H1 (cell line): ENCODE measurements at regions of chr1 and their contacts with region 1.

Region 1: DNA sequence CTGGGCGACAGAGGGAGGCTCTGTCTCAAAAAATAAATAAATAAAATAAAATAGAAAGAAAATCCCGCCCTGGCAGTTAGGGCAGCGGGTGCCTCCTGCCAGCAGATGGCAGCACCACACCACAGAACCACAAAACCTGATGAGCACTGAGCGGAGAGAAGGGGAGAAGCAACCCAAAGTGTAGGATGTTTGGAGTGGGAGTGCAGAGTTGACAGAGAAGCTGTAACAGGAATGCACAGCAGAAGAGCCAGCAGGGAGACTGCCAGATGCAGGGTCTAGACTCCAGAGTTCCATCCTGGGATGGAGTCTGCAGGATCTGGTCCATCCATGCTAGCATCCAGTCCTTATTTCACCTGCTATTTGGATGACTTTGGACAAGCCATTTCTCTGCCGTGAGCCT is 29.7 kb upstream of the KIRREL1 start:
- DNase-seq: peak; percentile 17 to 86
- H3K4me3 ChIP-seq: no peak overlapping the region
- H3K27ac ChIP-seq: no peak overlapping the region
- H3K4me1 ChIP-seq: peaks cover 0 to 8% (median 1%) of the 10 kb centered on the region in 4 experiments; a peak in 3 of 7 replicates
- H3K27me3 ChIP-seq: peaks cover 0 to 2% (median 0%) of the 10 kb centered on the region in 4 experiments; a peak in 1 of 7 replicates
- CTCF ChIP-seq: peak; percentile 75 to 95 (median 76)
- EP300 ChIP-seq: no peak
- POLR2A ChIP-seq: no peak
- RAD21 ChIP-seq: peak; percentile 96 to 97

Region 2: GRCh38 chr1:157862114-157863070 is 101.3 kb before region 1 on chr1:
- CTCF ChIA-PET with region 1: no interaction called
- POLR2A ChIA-PET with region 1: no interaction called
- DNase-seq: no peak
- H3K4me3 ChIP-seq: no peak overlapping the region
- H3K27ac ChIP-seq: no peak overlapping the region
- H3K4me1 ChIP-seq: no peaks in the 10 kb centered on the region
- H3K27me3 ChIP-seq: no peaks in the 10 kb centered on the region
- CTCF ChIP-seq: no peak
- EP300 ChIP-seq: no peak
- POLR2A ChIP-seq: no peak
- RAD21 ChIP-seq: no peak

Region 3: DNA sequence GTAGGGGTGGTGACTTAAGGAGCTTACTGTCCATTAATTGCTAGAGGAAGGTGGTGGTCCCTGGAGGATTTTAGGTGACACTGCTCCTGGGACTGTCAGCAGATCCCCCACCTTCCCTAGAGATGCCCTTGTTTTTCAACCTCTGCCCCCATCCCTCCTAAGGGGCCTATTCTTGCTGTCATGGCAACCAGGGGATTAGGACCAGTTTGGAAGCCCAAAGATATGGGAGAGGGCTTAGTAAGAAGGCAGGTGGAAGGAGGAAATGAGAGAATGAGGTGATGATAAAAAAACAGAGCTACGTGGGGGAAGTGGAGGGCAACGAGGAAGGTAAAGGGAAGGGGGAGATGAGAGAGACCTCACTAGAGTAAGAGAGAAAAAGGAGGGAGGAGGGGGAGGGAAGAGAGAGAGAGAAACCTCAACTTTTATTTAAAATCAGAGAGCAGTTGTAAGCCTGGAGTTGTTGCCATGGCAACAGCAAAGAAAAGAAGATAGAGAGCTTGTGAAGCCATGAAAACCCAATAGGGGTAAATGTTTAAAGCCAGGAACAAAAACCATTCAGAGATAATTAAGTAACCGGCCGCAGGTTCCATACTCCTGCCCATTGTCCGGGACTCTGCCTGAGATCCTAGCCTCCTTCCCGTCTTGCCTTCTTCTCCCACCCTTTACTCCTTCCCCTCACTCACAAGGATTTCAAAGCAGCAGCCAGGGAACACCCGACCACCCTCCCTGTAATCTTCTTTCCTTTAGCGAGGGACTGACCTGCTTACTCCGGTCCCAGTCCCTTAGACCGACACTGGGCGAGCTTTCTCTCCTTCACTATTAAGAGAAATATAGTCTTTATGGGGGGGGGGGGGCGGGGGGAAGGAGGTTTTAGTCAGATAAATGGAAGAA is 50.4 kb after region 1 on chr1:
- CTCF ChIA-PET with region 1: interaction called, 10 read pairs
- POLR2A ChIA-PET with region 1: no interaction called
- DNase-seq: no peak
- H3K4me3 ChIP-seq: peak overlapping the region in 1 of 4 experiments; percentile 11; a peak in 3 of 8 replicates
- H3K27ac ChIP-seq: no peak overlapping the region
- H3K4me1 ChIP-seq: peaks cover 13 to 44% (median 35%) of the 10 kb centered on the region in 4 experiments
- H3K27me3 ChIP-seq: no peaks in the 10 kb centered on the region
- CTCF ChIP-seq: no peak
- EP300 ChIP-seq: no peak
- POLR2A ChIP-seq: no peak
- RAD21 ChIP-seq: no peak

Region 4: DNA sequence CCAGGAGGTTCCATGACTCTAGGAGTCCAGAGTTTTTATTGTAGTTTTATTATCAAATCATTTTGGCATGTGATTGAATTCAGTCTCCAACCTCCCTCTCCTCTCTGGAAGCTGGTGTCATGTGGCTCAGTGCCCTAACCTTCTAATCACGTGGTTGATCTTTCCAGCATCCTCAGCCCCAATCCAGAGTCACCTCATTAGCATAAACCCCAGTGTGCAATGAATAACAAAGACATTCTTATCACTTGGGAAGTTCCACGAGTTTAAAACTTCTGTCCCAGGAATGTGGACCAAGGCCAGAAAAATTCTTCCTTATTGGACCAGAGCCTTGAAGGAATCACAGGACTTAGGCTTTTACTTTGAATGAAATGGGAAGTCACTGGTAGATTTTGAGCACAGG is 81.9 kb after region 1 on chr1:
- CTCF ChIA-PET with region 1: interaction called, 10 read pairs
- POLR2A ChIA-PET with region 1: no interaction called
- DNase-seq: peak in 1 of 2 experiments; percentile 17
- H3K4me3 ChIP-seq: no peak overlapping the region; a peak in 1 of 8 replicates
- H3K27ac ChIP-seq: no peak overlapping the region
- H3K4me1 ChIP-seq: peaks cover 2 to 19% (median 12%) of the 10 kb centered on the region in 4 experiments
- H3K27me3 ChIP-seq: no peaks in the 10 kb centered on the region
- CTCF ChIP-seq: no peak
- EP300 ChIP-seq: no peak
- POLR2A ChIP-seq: no peak
- RAD21 ChIP-seq: no peak